MCF 10A (cell line): ENCODE measurements at regions of chr2 and their contacts with region 1.

Region 1: GRCh38 chr2:60881047-60881932 is at the start of gene REL:
- DNase-seq: peak; percentile 90
- H3K4me3 Mint-ChIP-seq: peak within 1 kb of the TSS; percentile 83
- H3K27ac Mint-ChIP-seq: peak within 1 kb of the TSS; percentile 96
- H3K4me1 Mint-ChIP-seq: peaks cover 10% of the 10 kb centered on the region
- H3K27me3 Mint-ChIP-seq: no peaks in the 10 kb centered on the region
- CTCF ChIP-seq: no peak
- total RNA-seq, gene REL: 11.3 and 12.6 TPM in 2 replicates

Region 2: DNA sequence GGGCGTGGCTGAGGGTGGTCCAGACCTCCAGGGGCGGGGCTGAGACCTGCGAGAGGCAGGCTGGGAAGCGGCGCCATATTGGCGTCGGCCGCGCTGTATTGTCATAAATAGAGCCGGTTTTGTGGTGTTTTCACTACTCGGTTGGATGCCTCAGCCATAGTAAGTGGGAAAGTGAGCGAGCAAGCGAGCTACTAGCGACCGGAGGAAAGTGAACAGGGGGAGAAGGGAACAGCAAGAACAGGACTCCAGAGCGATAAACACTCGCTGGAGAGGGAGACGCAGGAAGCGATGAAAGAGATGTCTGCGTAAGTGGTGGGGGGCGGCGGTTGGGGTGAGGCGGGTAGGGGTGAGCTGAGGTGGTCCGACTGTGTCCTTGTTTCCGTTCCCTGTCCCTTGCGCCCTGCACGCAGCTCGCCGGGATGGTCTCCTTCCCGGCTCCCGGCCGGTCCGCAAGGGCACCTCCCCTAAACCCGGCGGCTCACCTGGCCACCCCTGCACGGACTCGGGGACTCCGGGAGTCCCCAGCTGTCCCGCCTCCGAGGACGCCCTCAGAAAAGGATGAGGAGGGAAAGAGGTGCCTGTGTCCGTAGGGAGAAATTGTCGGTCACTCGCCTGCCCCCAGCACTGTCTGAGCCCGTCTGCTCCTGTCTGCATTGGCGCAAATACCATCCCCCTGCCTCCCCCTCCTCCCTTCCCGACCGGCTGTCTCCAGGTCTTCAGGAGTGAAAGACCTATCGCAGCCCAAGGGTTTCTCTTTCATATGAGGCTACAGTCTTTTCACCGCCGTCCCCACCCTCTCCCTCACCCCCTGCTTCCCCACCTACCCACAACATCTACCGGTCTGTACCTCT is 124.9 kb before region 1 on chr2 and contains the start of gene PAPOLG:
- CTCF ChIA-PET with region 1: interaction called, 4 read pairs
- POLR2A ChIA-PET with region 1: interaction called, 25 read pairs
- intact Hi-C with region 1: no loop called
- DNase-seq: peak; percentile 95
- H3K4me3 Mint-ChIP-seq: peak within 1 kb of the TSS; percentile 100
- H3K27ac Mint-ChIP-seq: peak within 1 kb of the TSS; percentile 99
- H3K4me1 Mint-ChIP-seq: peaks cover 10% of the 10 kb centered on the region
- H3K27me3 Mint-ChIP-seq: no peaks in the 10 kb centered on the region
- CTCF ChIP-seq: no peak
- total RNA-seq, gene PAPOLG: 16.9 and 18.4 TPM in 2 replicates

Region 3: GRCh38 chr2:60948926-60949579 is 67.8 kb after region 1 on chr2:
- CTCF ChIA-PET with region 1: interaction called, 3 read pairs
- POLR2A ChIA-PET with region 1: interaction called, 31 read pairs
- intact Hi-C with region 1: no loop called
- DNase-seq: peak; percentile 80
- H3K4me3 Mint-ChIP-seq: no peak overlapping the region
- H3K27ac Mint-ChIP-seq: peak overlapping the region; percentile 89
- H3K4me1 Mint-ChIP-seq: peaks cover 35% of the 10 kb centered on the region
- H3K27me3 Mint-ChIP-seq: no peaks in the 10 kb centered on the region
- CTCF ChIP-seq: no peak

Region 4: DNA sequence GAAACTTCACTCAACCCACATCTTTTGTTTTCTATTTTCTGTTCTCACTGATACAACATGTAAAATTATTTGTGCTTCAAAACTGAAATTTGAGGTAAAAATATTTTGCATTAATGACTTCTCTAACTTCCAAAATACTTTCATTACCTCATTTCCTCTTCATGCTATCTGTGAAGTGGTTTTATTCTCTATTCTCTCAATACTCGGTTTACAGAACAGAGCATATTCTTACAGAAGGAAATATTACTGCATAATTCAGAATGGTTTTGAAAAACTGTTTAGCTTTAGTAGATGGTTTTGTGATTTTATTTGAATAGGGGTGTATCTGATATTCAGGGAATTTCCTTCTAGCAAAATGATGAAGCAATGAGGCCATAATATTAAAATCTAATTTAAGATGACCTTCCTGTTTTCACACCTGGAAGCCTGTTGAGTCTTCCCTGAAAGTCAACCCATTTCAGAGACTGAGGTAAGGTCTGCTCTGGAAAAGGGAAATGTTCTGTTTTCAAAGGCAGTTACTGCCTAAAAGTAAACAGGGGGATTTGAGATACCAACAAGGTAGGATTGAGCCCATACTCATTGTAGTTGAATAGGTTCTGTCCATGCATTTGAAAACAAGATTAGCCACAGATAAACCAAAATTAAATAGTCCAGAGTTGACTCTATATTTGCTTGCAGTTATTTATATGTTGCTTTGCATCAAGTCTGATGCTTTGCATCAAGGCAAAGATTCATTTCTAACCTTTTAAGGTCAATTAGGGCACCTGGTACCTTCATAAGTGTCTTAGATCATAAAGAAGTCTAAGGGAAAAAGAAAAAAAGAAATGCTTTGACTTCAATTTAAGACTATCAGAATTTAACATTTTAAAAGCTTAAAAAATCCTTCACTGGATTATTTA is 85.5 kb after region 1 on chr2:
- CTCF ChIA-PET with region 1: no interaction called
- POLR2A ChIA-PET with region 1: interaction called, 67 read pairs
- intact Hi-C with region 1: loop called (anchors 5 kb)
- DNase-seq: no peak
- H3K4me3 Mint-ChIP-seq: no peak overlapping the region
- H3K27ac Mint-ChIP-seq: no peak overlapping the region
- H3K4me1 Mint-ChIP-seq: no peaks in the 10 kb centered on the region
- H3K27me3 Mint-ChIP-seq: no peaks in the 10 kb centered on the region
- CTCF ChIP-seq: no peak

Region 5: DNA sequence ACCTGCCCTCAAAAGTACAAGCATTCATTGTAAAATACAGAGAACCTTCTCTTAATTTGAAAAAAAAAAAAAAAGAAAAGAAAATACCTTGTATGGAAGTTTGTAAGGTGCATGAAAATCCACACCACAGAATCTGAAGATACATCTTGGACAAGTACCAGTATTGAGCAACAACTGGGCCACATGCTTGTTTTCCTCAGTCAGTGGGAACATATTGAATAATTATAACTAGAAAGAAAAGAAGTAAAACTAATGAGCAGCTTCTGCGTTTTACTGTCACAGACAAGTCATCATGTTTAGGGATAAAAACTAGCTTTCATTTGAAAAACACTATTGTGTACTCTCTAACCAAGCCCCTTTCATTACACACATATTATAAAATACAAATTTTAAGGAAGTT is 130.4 kb after region 1 on chr2:
- CTCF ChIA-PET with region 1: no interaction called
- POLR2A ChIA-PET with region 1: interaction called, 135 read pairs
- intact Hi-C with region 1: no loop called
- DNase-seq: peak; percentile 45
- H3K4me3 Mint-ChIP-seq: no peak overlapping the region
- H3K27ac Mint-ChIP-seq: no peak overlapping the region
- H3K4me1 Mint-ChIP-seq: peaks cover 6% of the 10 kb centered on the region
- H3K27me3 Mint-ChIP-seq: no peaks in the 10 kb centered on the region
- CTCF ChIP-seq: no peak